GM13976 (cell line): ENCODE measurements at regions of chr1 and their contacts with region 1.

Region 1: GRCh38 chr1:209860293-209860881 is 32.6 kb downstream of the UTP25 start:
- DNase-seq: peak; percentile 82
- CTCF ChIP-seq: peak; percentile 68

Region 2: DNA sequence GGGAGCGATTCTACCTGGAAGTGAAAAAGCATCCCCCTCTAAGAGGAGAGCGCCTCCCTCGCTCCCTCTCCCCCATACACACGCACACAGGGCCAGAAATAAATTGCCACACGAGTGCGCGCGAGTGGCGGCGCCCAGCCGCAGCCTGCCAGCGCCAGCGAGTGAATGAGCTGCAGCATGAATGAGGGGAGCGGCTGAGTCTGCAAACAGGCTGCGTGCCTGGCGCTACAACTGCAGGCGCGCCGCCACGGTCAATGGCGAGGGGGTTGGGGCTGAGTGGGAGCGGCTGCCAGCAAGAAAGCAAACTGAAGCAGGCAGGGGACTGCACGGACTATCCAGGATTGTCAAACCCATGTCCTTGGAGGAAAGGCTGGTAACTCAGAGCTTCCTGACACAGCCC is 274.7 kb before region 1 on chr1:
- in situ Hi-C with region 1: no loop called
- DNase-seq: peak; percentile 32
- CTCF ChIP-seq: no peak

Region 3: DNA sequence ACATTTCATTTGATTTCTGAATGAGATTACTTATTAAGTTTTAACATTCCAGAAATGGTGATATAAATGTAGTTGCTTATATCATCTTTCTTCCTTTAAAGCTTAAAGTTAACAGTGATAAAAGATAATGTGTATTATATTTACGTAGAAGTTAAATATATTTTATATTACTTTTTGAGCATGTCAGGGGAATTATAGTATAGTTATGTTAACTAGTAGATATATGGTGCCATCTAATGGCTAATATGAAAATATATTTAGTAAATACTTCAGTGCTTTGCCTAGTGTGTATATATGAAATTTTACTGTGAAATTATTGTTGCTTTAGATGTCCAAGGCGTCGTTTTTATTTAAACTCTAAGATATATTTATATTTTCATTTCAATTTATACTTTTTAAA is 129.1 kb after region 1 on chr1:
- in situ Hi-C with region 1: loop called (anchors 10 kb)
- DNase-seq: peak; percentile 17
- CTCF ChIP-seq: no peak

Region 4: GRCh38 chr1:210301615-210302000 is 441.2 kb after region 1 on chr1:
- in situ Hi-C with region 1: loop called (anchors 25 kb)
- DNase-seq: no peak
- CTCF ChIP-seq: no peak